Psoas muscle (tissue), 8 donors: ENCODE measurements at regions of chr7 and their contacts with region 1.

Region 1: GRCh38 chr7:39971924-39972323 is 21.9 kb downstream of the CDK13 start:
- DNase-seq: no peak
- ATAC-seq: no peak
- H3K4me3 ChIP-seq: no peak overlapping the region
- H3K27ac ChIP-seq: no peak overlapping the region
- H3K4me1 ChIP-seq: peaks cover 36% of the 10 kb centered on the region
- H3K27me3 ChIP-seq: no peaks in the 10 kb centered on the region
- CTCF ChIP-seq: no peak

Region 2: DNA sequence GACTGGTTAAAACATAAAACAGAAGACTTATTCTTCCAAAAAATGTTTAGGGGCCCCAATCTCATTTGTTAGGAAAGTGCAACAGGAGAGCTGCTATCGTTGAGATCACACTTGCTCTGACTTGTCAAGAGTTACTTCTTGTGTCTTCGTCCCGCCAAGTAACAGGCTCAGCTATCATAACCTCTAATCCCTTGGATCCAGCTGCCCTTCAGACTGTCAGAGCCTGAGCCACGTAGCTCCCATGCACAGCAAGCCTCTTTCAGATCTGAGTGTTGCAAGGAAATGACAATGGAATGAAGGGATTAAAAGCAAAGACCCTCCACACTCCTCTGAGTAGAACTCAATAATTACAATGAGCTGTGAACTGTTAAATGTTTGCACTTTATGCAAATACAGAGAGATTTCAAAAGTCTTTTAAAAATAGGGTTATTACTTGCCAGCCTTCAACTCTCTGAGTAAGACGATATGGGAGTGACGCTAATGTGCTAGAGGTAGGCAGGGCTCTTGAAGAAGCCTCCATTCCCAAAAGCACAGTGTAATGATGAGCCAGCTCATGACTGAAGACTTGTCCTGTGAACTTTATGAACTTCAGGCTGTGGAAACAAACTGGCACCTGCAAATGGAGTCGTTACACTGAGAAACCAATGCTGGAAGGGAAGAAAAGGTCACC is 50.3 kb before region 1 on chr7:
- intact Hi-C with region 1: no loop called
- DNase-seq: no peak
- ATAC-seq: peak; percentile 88 to 96 (median 93)
- H3K4me3 ChIP-seq: peak overlapping the region; percentile 41
- H3K27ac ChIP-seq: peak overlapping the region; percentile 68
- H3K4me1 ChIP-seq: no peaks in the 10 kb centered on the region
- H3K27me3 ChIP-seq: no peaks in the 10 kb centered on the region
- CTCF ChIP-seq: no peak

Region 3: GRCh38 chr7:39948375-39948955 is 23.5 kb before region 1 on chr7:
- intact Hi-C with region 1: no loop called
- DNase-seq: no peak
- ATAC-seq: no peak
- H3K4me3 ChIP-seq: peak overlapping the region; percentile 95
- H3K27ac ChIP-seq: peak overlapping the region; percentile 96
- H3K4me1 ChIP-seq: peaks cover 15% of the 10 kb centered on the region
- H3K27me3 ChIP-seq: no peaks in the 10 kb centered on the region
- CTCF ChIP-seq: no peak

Region 4: DNA sequence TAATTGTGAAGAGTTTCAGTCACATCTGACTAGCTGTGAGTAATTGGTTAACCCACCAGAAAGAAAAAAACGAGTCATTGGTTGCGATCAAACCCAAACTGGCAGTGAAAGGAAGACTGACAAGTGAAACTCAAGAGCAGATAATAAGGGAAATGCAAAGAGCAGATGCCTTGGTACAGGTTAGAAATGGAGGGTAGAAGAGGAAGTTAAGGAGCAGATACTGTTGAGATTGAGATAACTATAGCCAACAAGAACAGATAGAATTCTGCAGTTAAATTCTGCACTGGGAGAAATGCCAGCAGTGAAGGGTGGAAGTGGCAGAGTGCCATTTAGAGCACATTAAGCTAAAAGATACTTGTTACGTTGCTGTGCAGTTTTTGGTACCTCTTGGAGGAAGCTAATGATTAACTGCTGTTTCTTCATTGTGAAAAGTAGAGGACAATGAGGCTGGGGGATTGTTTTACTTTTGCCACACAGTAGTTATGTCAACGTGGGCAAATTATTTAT is 43.9 kb after region 1 on chr7:
- intact Hi-C with region 1: no loop called
- DNase-seq: no peak
- ATAC-seq: peak in 1 of 4 donors; percentile 26
- H3K4me3 ChIP-seq: no peak overlapping the region
- H3K27ac ChIP-seq: no peak overlapping the region
- H3K4me1 ChIP-seq: peaks cover 4% of the 10 kb centered on the region
- H3K27me3 ChIP-seq: no peaks in the 10 kb centered on the region
- CTCF ChIP-seq: no peak

Region 5: DNA sequence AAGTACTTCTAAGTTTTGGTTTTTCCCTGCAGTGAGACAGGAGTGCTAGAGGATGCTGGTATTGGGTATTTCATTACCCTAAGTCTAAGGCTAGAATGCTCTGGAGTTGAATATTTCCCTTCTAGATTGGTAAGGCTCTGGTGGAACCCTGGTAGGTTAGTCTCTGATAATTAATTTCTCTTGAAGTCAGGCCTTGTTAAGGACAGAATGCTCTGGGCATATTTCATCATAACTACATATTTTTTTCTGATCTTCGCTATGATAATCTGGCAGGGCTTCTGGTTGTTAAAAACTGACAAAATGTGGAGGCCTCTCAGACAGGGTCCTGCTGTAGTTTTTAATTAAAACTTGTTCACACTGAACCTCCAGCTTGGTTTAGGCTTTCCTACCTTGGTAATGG is 61.9 kb after region 1 on chr7:
- intact Hi-C with region 1: loop called in 1 of 2 experiments (anchors 2 kb)
- DNase-seq: no peak
- ATAC-seq: no peak
- H3K4me3 ChIP-seq: no peak overlapping the region
- H3K27ac ChIP-seq: no peak overlapping the region
- H3K4me1 ChIP-seq: peaks cover 8% of the 10 kb centered on the region
- H3K27me3 ChIP-seq: no peaks in the 10 kb centered on the region
- CTCF ChIP-seq: no peak

Region 6: GRCh38 chr7:40122940-40123254 is 151.0 kb after region 1 on chr7:
- intact Hi-C with region 1: no loop called
- DNase-seq: no peak
- ATAC-seq: no peak
- H3K4me3 ChIP-seq: no peak overlapping the region
- H3K27ac ChIP-seq: no peak overlapping the region
- H3K4me1 ChIP-seq: no peaks in the 10 kb centered on the region
- H3K27me3 ChIP-seq: no peaks in the 10 kb centered on the region
- CTCF ChIP-seq: no peak